ENCODE measurements at regions of chr4 and their contacts with region 1.

Region 1: GRCh38 chr4:124262211-124263179 is 450.0 kb downstream of the ANKRD50 start:
- DNase-seq: peak; percentile 91
- H3K4me3 ChIP-seq: no peak overlapping the region
- H3K27ac ChIP-seq: no peak overlapping the region
- H3K4me1 ChIP-seq: no peaks in the 10 kb centered on the region
- H3K27me3 ChIP-seq: no peaks in the 10 kb centered on the region
- CTCF ChIP-seq: peak; percentile 92

Region 2: GRCh38 chr4:122602277-122603142 is 1660.0 kb before region 1 on chr4:
- CTCF ChIA-PET with region 1: no interaction called
- POLR2A ChIA-PET with region 1: no interaction called
- intact Hi-C with region 1: loop called (anchors 10 kb)
- DNase-seq: peak; percentile 64
- H3K4me3 ChIP-seq: no peak overlapping the region
- H3K27ac ChIP-seq: no peak overlapping the region
- H3K4me1 ChIP-seq: peaks cover 3% of the 10 kb centered on the region
- H3K27me3 ChIP-seq: no peaks in the 10 kb centered on the region
- CTCF ChIP-seq: peak; percentile 58

Region 3: DNA sequence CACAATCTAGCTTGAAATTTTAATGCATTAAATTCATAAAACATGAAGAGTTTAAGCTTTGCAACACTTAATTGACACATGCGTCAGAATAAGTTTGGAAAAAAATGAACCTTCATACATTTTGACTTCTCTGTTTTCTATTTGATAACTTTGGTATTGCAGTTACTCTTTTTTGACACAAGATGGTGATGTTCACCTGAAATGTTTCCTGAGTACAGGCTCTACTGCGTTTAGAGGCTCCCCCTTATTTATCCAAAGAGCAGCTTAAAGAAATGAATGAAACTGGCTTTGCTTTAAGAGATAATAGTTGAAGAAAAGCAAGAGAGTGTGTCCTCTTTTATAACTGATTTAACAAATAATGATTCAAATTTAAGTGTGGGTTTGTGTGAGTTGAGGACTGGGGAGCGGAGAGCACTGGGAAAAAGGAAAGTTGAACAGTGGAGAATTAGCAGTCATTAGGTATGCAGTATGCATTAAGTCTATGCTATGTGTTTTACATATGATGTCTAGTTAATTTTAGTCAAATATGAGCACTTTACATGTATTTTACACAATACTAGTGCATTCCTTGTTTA is 1159.5 kb before region 1 on chr4:
- CTCF ChIA-PET with region 1: no interaction called
- POLR2A ChIA-PET with region 1: no interaction called
- intact Hi-C with region 1: loop called (anchors 5 kb)
- DNase-seq: peak; percentile 69
- H3K4me3 ChIP-seq: no peak overlapping the region
- H3K27ac ChIP-seq: no peak overlapping the region
- H3K4me1 ChIP-seq: peaks cover 18% of the 10 kb centered on the region
- H3K27me3 ChIP-seq: no peaks in the 10 kb centered on the region
- CTCF ChIP-seq: peak; percentile 82

Region 4: DNA sequence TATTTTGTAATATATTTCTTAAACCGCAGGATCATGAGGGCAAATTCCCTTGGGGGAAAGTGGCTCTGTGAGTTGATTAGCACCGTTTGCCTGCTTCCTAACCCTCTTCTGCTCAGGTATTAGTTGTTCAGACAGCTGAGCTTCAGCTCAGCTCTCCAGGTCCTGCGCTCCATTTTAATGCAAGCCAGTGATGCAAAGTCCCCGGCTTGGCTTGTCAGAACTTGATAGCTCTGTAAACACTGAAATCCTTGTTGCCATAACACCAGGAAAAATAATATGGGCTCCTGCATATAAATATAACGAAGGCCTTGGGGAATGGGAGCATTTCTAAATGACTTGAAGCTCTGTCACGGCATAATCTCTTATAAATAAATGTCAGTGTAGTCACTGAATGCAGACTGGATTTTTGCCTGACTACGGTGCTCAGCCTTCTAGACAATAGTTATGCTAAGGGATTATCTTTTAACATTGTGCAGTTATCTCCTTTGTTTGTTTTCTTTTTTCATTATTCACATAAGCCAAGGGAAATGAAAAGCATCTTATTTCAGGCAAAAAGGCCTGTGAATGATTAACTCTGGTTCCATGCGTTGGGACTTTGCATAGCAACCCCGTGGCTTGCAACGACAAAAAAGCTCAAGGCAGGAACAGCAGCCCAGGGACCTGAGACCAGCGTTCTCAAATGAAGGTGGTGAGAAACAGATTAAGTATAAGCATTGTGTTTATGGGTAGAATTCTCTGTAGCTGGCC is 612.7 kb before region 1 on chr4:
- CTCF ChIA-PET with region 1: no interaction called
- POLR2A ChIA-PET with region 1: no interaction called
- intact Hi-C with region 1: loop called (anchors 10 kb)
- DNase-seq: peak; percentile 13
- H3K4me3 ChIP-seq: no peak overlapping the region
- H3K27ac ChIP-seq: no peak overlapping the region
- H3K4me1 ChIP-seq: no peaks in the 10 kb centered on the region
- H3K27me3 ChIP-seq: no peaks in the 10 kb centered on the region
- CTCF ChIP-seq: no peak

Region 5: DNA sequence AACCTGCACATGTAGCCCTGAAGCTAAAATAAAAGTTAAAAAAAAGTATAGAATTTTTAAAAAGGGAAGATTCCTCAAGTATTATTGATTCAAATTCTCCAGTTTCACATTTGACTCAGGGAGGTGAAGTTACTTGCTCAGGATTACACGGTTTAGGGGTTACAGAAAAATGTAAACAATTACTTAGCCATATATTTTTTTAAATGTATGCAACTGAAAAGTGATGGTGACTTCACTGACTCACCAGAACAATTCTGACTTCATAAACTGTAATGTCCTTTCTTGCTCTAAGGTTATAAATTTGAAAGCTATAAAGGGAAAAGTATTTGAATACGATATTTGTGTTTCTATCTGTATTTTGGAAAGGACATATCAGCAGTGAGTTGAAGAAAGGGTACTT is 494.7 kb before region 1 on chr4:
- CTCF ChIA-PET with region 1: interaction called, 4 read pairs
- POLR2A ChIA-PET with region 1: no interaction called
- intact Hi-C with region 1: loop called (anchors 5 kb)
- DNase-seq: no peak
- H3K4me3 ChIP-seq: no peak overlapping the region
- H3K27ac ChIP-seq: no peak overlapping the region
- H3K4me1 ChIP-seq: no peaks in the 10 kb centered on the region
- H3K27me3 ChIP-seq: no peaks in the 10 kb centered on the region
- CTCF ChIP-seq: no peak